SK-N-SH (cell line): ENCODE measurements at regions of chr5 and their contacts with region 1.

Region 1: GRCh38 chr5:90783460-90784333 is 225.1 kb downstream of the ADGRV1 start:
- DNase-seq: peak; percentile 43
- H3K4me3 ChIP-seq: peak overlapping the region in 1 of 2 experiments; percentile 30; a peak in 1 of 4 replicates
- H3K27ac ChIP-seq: no peak overlapping the region
- H3K4me1 ChIP-seq: no peaks in the 10 kb centered on the region
- H3K27me3 ChIP-seq: no peaks in the 10 kb centered on the region
- CTCF ChIP-seq: peak; percentile 91
- EP300 ChIP-seq: no peak
- RAD21 ChIP-seq: peak; percentile 96

Region 2: GRCh38 chr5:90529194-90529938 is 254.3 kb before region 1 on chr5 and contains the start of gene LYSMD3:
- CTCF ChIA-PET with region 1: interaction called, 10 read pairs
- POLR2A ChIA-PET with region 1: no interaction called
- DNase-seq: peak; percentile 99
- H3K4me3 ChIP-seq: peak within 1 kb of the TSS; percentile 99 to 100
- H3K27ac ChIP-seq: peak within 1 kb of the TSS; percentile 79 to 91
- H3K4me1 ChIP-seq: peaks cover 0 to 5% of the 10 kb centered on the region in 2 experiments; a peak in 3 of 4 replicates
- H3K27me3 ChIP-seq: peaks cover 11% of the 10 kb centered on the region
- CTCF ChIP-seq: no peak
- EP300 ChIP-seq: no peak
- RAD21 ChIP-seq: no peak
- polyA plus RNA-seq, gene LYSMD3: 5.2 and 6.7 TPM in 2 replicates

Region 3: DNA sequence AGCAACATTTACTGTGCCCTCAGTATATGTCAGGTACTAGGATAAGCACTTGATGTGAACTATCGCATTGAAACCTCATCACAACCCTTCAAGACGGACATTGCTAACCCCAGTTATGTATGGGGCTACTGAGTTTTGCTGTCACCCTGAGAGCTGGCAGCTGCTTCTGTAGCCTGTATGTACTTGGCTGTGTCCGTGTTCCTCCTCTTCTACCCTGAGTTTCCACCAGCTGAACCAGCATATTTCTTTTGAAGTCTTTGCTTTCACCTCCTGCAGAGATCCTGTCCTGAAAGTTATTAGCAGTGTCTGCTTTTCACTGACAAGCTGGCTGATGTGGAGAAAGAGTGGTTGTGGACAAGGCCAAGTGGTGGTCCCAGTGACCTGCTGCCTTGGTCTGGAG is 161.8 kb before region 1 on chr5:
- CTCF ChIA-PET with region 1: no interaction called
- POLR2A ChIA-PET with region 1: no interaction called
- DNase-seq: no peak
- H3K4me3 ChIP-seq: no peak overlapping the region
- H3K27ac ChIP-seq: no peak overlapping the region
- H3K4me1 ChIP-seq: no peaks in the 10 kb centered on the region
- H3K27me3 ChIP-seq: no peaks in the 10 kb centered on the region
- CTCF ChIP-seq: no peak
- EP300 ChIP-seq: no peak
- RAD21 ChIP-seq: no peak

Region 4: DNA sequence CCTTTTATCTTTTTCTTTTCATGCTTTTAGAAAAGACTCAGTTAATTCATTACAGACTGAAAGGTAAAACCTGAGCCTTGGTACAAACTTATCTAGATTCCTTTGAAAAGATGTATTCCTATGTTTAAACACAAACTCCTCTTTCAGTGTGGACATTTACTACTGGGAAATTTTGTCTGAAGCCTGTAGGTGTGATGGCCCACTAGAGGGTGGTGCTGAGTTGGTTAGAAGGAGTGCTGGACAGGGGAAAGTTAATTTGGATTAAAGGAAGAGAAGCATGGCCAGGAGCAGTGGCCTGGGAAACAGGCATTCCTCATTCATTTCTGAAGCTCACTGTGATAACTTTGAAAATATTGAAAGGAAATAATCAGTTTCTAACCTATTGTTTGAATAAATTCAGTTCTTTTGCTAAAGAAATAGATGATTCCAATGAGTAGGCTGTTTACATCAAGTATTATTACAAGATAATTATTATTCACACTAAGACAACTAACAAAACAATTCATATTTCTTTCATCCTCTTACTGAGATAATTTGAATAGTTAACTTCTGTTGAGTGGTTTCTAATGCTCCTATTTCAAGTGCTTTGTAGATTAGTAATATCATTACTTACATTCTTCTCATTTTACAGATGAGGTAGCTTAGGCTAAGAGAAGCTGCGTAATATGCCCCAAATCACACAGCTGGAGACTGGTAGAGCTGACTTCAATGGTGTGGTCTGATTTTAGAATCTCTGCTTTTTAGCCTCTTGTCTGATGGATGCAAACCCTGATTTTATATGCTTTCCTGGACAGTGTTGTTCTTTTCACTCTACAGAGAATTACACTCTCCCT is 74.2 kb before region 1 on chr5:
- CTCF ChIA-PET with region 1: interaction called, 45 read pairs
- POLR2A ChIA-PET with region 1: no interaction called
- DNase-seq: peak; percentile 58
- H3K4me3 ChIP-seq: no peak overlapping the region
- H3K27ac ChIP-seq: no peak overlapping the region
- H3K4me1 ChIP-seq: no peaks in the 10 kb centered on the region
- H3K27me3 ChIP-seq: no peaks in the 10 kb centered on the region
- CTCF ChIP-seq: peak; percentile 70
- EP300 ChIP-seq: no peak
- RAD21 ChIP-seq: peak; percentile 69

Region 5: DNA sequence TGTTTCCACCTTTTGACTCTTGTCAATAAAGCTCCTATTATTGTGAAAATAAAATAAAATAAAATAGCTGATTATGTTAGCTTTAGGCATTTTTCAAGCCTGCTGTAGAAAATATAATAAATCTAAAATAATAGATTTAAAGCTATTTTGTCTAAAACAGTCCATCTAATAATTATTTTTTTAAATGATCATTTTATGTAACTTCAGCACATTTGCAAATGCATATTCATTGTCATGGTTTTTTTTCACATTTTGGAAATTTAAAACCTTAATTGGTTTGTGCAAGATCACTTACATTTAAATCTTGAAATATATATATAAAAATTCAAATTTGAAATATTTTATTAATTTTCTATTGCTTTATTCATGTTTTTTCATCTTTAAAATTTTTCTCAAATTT is 65.3 kb before region 1 on chr5:
- CTCF ChIA-PET with region 1: interaction called, 11 read pairs
- POLR2A ChIA-PET with region 1: no interaction called
- DNase-seq: no peak
- H3K4me3 ChIP-seq: no peak overlapping the region
- H3K27ac ChIP-seq: no peak overlapping the region
- H3K4me1 ChIP-seq: no peaks in the 10 kb centered on the region
- H3K27me3 ChIP-seq: no peaks in the 10 kb centered on the region
- CTCF ChIP-seq: no peak
- EP300 ChIP-seq: no peak
- RAD21 ChIP-seq: no peak

Region 6: DNA sequence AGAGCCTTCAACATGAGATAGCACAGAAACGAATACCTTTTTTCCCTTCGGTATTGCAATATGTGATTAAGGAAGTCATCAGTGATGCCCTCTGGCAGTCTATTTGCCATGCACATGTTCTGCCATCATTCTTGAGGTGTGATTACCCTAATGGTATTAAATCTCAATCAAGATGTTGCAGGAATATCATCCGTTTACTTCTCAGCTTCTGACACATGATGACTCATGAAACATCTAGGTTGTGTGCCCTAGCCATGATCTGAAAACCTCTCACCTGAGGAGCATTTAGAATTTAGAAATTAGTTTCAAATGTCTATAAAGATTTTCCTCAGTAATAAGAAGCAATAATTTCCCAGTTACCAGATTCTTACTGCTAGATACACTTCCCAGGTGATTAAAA is 16.0 kb before region 1 on chr5:
- CTCF ChIA-PET with region 1: interaction called, 29 read pairs
- POLR2A ChIA-PET with region 1: no interaction called
- DNase-seq: no peak
- H3K4me3 ChIP-seq: no peak overlapping the region
- H3K27ac ChIP-seq: no peak overlapping the region
- H3K4me1 ChIP-seq: no peaks in the 10 kb centered on the region
- H3K27me3 ChIP-seq: no peaks in the 10 kb centered on the region
- CTCF ChIP-seq: no peak
- EP300 ChIP-seq: no peak
- RAD21 ChIP-seq: no peak

Region 7: DNA sequence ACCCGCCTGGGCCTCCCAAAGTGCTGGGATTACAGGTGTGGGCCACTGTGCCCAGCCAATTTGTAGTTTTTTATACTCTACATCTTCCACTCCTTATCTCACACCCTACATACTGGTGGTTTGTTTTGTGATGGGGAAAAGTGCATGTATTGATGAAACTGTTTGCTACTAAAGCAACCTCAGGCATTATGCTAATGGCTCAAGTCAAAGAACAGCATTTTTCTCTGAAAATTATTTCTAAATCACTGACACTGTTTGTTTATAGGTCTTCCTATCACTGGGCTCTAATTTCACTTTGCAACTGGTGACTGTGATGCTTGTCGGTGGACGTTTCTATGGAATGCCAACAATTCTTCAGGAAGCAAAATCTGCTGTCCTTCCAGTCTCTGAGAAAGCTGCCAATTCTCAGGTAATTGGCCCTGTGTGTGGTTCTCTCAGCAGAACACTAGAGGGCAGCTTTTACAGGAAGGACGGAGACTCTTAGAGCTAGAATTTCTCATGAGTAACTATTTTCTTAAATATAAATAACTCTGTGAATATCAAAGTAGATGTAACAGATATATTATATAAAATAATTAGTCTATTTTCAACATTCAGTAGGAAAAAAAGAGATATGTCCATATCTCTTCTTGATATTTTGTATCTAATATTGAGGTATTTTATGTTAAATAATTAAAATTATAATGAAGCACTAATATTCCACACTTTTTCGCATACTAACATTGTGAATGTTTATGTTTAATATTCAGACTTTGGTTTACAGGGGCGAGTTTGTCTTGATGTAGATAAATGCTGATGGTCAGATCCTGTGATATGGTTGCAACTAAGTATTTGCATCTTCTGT is 19.0 kb after region 1 on chr5:
- CTCF ChIA-PET with region 1: interaction called, 10 read pairs
- POLR2A ChIA-PET with region 1: no interaction called
- DNase-seq: peak; percentile 41
- H3K4me3 ChIP-seq: no peak overlapping the region
- H3K27ac ChIP-seq: no peak overlapping the region
- H3K4me1 ChIP-seq: no peaks in the 10 kb centered on the region; a peak in 1 of 4 replicates
- H3K27me3 ChIP-seq: no peaks in the 10 kb centered on the region
- CTCF ChIP-seq: peak; percentile 70
- EP300 ChIP-seq: no peak
- RAD21 ChIP-seq: peak; percentile 61